OCI-LY7 (cell line): ENCODE measurements at regions of chr16 and their contacts with region 1.

Region 1: DNA sequence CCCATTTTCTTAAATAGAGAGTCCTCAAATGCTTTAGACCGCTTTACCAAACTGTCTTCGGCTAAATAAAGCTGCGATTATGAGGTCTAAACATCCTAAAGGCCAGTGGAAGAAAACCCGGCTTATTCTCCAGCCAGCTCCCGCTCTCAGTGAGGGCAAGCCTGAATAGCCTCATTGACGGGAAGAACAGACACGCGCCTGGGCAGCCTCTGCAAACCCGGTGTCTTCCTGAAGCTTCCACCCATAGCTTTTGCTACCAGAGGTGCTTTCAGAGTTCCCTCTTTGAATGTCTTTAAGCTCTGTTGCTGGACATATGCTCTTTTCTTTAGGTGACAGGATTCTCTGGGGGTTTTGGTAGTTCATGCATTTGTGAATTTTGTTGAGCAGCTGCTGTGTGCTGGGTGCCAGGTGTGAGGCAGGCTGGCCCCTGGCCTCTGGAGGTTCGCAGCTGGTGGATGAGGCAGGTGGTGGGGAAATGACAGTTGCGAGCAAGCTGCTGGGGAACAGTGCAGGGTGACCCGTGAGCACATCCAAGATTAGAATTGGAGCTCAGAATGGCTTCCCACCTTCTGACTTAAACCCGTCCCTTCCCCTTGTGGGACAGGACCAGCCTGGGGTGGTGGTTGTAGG is 44.7 kb downstream of the CRISPLD2 start:
- DNase-seq: peak; percentile 90
- H3K4me3 ChIP-seq: no peak overlapping the region
- H3K27ac ChIP-seq: peak overlapping the region; percentile 83
- H3K4me1 ChIP-seq: peaks cover 33% of the 10 kb centered on the region
- CTCF ChIP-seq: no peak

Region 2: DNA sequence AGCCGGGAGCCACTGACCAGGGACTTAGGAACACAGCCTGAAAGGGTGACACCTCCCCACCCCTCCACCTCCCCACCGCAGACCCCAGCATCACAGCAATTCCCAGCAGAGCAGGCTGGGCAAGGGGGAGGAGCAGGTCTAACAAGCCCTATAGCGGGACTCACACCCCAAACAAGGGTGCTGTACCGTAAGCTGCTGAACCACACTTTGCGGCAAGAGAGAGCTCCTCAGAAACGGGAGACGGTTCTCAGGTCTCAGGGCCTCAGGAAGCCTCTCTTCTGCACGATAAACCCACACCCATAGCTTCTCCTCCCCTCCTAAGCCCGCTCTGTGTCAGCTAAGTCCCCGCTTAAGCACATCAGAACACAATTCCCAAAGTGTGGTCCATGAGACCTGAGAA is 234.9 kb before region 1 on chr16:
- CTCF ChIA-PET with region 1: no interaction called
- POLR2A ChIA-PET with region 1: no interaction called
- intact Hi-C with region 1: loop called (anchors 10 kb)
- DNase-seq: no peak
- H3K4me3 ChIP-seq: no peak overlapping the region
- H3K27ac ChIP-seq: no peak overlapping the region
- H3K4me1 ChIP-seq: peaks cover 33% of the 10 kb centered on the region
- CTCF ChIP-seq: no peak

Region 3: GRCh38 chr16:84893849-84894599 is 29.6 kb after region 1 on chr16:
- CTCF ChIA-PET with region 1: no interaction called
- POLR2A ChIA-PET with region 1: interaction called, 3 read pairs
- intact Hi-C with region 1: loop called (anchors 1 kb)
- DNase-seq: peak; percentile 81
- H3K4me3 ChIP-seq: peak overlapping the region; percentile 20
- H3K27ac ChIP-seq: peak overlapping the region; percentile 66
- H3K4me1 ChIP-seq: peaks cover 37% of the 10 kb centered on the region
- CTCF ChIP-seq: no peak